ENCODE measurements at regions of chr2 and their contacts with region 1.

Region 1: GRCh38 chr2:72993147-72993932 is 76.0 kb downstream of the EMX1 start:
- DNase-seq: no peak
- H3K4me3 ChIP-seq: no peak overlapping the region
- CTCF ChIP-seq: peak; percentile 66

Region 2: GRCh38 chr2:72895759-72896281 is 97.5 kb before region 1 on chr2:
- CTCF ChIA-PET with region 1: interaction called, 502 read pairs
- POLR2A ChIA-PET with region 1: no interaction called
- DNase-seq: no peak
- H3K4me3 ChIP-seq: no peak overlapping the region; the same call in 1 of the 2 replicates
- CTCF ChIP-seq: no peak

Region 3: DNA sequence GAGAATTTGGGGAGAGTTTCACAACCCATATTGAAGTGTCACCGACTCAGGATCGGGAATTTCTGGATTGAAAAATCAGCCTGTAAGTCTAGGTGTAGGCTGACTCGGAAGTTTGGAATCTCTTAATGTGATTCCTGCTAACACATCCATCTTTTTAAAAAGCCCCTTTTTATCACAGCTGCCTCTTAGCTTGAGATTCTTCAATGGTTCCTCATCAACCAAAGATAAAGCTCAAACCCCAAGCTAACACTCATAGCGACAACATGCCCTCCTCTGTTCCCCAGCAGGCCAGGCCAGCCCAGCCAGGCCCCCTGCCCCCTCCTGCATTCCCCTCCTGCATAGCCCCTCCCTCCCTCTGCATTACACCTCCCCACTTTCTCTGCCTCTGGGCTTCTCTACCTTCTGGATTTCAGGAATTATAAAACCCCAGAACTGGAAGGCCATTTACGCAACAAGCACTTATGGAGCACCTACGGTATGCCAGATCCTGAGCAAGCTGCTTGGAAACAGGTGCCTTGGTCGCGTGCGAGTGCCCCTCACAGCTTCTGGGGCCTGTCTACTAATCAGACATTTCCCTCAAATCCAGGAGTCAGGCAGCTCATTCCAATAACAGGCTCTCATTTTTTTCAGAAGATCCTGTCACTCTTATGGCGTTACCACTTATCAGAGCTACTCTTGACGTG is 12.7 kb before region 1 on chr2:
- CTCF ChIA-PET with region 1: interaction called, 30 read pairs
- POLR2A ChIA-PET with region 1: no interaction called
- DNase-seq: peak; percentile 29
- H3K4me3 ChIP-seq: no peak overlapping the region
- CTCF ChIP-seq: no peak

Region 4: GRCh38 chr2:73006969-73007710 is 13.8 kb after region 1 on chr2:
- CTCF ChIA-PET with region 1: interaction called, 47 read pairs
- POLR2A ChIA-PET with region 1: no interaction called
- DNase-seq: no peak
- H3K4me3 ChIP-seq: no peak overlapping the region
- CTCF ChIP-seq: no peak

Region 5: GRCh38 chr2:73163483-73164367 is 170.4 kb after region 1 on chr2:
- CTCF ChIA-PET with region 1: interaction called, 129 read pairs
- POLR2A ChIA-PET with region 1: no interaction called
- DNase-seq: no peak
- H3K4me3 ChIP-seq: no peak overlapping the region
- CTCF ChIP-seq: peak; percentile 87